ENCODE measurements at regions of chr12 and their contacts with region 1.

Region 1: DNA sequence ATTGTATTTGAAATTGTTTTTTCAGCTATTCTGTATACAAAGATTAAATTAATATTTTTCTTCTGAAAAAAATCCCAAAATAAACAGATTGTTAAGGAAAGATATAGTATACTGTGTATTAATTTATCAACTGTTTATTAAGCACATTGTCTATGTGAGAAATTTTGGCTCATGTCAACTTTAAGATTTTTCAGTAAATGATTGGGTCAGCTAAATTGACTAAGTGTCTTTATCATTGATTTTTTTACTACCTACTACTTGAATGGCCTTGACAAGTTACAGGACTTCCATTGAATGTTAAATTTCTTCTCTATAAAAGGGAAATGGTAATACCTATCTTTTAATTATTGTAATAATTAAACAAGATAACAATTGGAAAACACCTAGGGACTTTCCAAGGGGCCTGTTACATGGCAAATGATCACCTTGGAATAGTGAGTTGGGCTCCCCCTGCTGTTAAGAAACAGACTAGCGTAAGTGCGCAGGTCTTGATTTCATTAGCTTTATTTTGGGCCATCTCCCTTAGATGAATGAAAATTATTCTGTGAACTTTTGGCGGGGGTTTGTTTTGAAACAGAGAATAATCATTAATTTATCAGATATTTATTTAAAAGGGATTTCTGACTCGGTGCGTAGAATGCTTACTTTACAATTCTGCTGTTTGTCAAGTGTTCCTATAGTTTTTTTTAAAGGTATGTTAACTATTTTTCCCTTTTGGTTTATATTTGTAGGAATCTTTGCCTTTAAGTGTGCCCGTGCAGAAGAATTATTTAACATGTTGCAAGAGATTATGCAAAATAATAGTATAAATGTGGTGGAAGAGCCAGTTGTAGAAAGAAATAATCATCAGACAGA is 14.5 kb upstream of the CCT2 start:
- DNase-seq: no peak
- H3K4me3 ChIP-seq: no peak overlapping the region
- H3K27ac ChIP-seq: peak overlapping the region; percentile 58
- H3K27me3 ChIP-seq: no peaks in the 10 kb centered on the region
- CTCF ChIP-seq: peak; percentile 82

Region 2: DNA sequence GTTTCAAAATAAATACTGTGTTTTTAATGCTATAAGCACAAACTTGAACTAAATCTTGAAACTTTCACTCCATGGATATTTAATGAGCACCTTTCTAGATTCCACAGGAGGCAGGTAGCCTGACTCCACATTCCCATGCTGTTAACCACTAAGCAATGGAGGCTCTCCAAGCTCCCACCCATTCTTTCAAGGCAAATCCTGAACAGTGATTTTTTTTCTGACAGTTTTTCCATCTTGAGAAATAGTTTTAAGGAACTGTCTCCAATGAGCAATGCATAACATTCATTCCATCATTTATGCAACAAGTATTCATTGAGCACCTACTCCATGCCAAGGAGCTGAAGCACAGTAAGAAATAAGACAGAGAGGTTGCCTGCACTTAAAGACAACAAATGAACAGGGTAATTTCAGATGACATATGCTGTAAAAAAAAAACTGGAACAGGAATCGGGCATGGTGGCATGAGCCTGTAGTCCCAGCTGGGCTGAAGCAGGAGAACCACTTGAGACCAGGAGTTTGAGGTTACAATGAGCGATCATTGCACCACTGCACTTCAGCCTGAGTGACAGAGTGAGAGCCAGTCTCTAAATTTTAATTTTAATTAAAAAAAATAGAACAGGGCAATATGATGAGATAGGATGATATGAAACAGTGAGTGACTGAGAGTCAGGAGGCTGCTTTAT is 433.7 kb before region 1 on chr12:
- CTCF ChIA-PET with region 1: no interaction called
- POLR2A ChIA-PET with region 1: no interaction called
- DNase-seq: no peak
- H3K4me3 ChIP-seq: no peak overlapping the region
- H3K27ac ChIP-seq: no peak overlapping the region
- H3K27me3 ChIP-seq: peaks cover 3% of the 10 kb centered on the region
- CTCF ChIP-seq: no peak

Region 3: DNA sequence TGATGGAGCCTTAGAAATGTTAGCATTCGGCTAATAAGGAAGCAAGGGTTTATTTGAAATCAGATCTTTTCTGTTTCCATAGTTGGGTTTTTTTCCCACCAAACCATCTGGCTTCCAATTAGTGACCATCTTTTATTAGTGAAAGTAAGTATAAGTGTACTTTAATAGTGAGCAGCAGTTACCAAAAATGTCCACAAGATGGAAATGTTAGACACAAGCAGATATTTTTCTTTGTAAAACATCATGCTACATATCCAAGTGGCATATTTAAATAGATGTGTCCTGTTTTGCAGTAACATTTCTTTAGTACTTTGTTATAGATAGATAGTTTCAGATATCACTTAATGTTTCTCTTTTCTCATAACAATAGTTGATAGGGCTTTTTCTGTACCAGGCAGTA is 182.4 kb before region 1 on chr12:
- CTCF ChIA-PET with region 1: interaction called, 90 read pairs
- POLR2A ChIA-PET with region 1: no interaction called
- DNase-seq: peak; percentile 50
- H3K4me3 ChIP-seq: no peak overlapping the region
- H3K27ac ChIP-seq: no peak overlapping the region
- H3K27me3 ChIP-seq: no peaks in the 10 kb centered on the region
- CTCF ChIP-seq: peak; percentile 73

Region 4: GRCh38 chr12:69396041-69396440 is 174.7 kb before region 1 on chr12:
- CTCF ChIA-PET with region 1: interaction called, 90 read pairs
- POLR2A ChIA-PET with region 1: no interaction called
- DNase-seq: no peak
- H3K4me3 ChIP-seq: no peak overlapping the region
- H3K27ac ChIP-seq: no peak overlapping the region
- H3K27me3 ChIP-seq: no peaks in the 10 kb centered on the region
- CTCF ChIP-seq: no peak

Region 5: GRCh38 chr12:69470189-69471075 is 100.3 kb before region 1 on chr12 and contains the start of gene FRS2:
- CTCF ChIA-PET with region 1: interaction called, 14 read pairs
- POLR2A ChIA-PET with region 1: interaction called, 5 read pairs
- DNase-seq: peak; percentile 71
- H3K4me3 ChIP-seq: peak within 1 kb of the TSS; percentile 89
- H3K27ac ChIP-seq: peak within 1 kb of the TSS; percentile 82
- H3K27me3 ChIP-seq: no peaks in the 10 kb centered on the region
- CTCF ChIP-seq: peak; percentile 48
- polyA plus RNA-seq, gene FRS2: 28.2 and 41.9 TPM in 2 replicates

Region 6: DNA sequence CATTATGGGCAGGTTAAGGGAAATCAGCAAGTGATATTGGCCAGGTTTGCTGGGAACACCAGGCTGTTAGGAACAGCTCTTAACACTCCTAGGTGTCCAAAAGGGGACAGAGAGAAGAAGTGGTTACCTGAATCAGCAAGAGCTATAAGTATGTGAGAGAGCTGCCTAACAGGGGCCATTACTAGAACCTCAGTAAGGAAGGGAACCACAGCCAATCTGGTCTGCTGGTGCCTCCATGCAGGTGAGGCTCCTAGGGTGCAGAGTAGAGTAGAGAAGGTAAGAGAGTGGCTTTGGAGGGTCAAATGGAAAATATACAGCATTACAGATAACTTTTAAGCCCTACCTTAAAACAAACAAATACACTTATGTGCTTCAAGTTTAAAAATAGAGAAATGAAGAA is 22.1 kb before region 1 on chr12:
- CTCF ChIA-PET with region 1: interaction called, 73 read pairs
- POLR2A ChIA-PET with region 1: no interaction called
- DNase-seq: no peak
- H3K4me3 ChIP-seq: no peak overlapping the region
- H3K27ac ChIP-seq: no peak overlapping the region
- H3K27me3 ChIP-seq: no peaks in the 10 kb centered on the region
- CTCF ChIP-seq: no peak

Region 7: GRCh38 chr12:69553627-69554248 is 17.0 kb before region 1 on chr12:
- CTCF ChIA-PET with region 1: interaction called, 73 read pairs
- POLR2A ChIA-PET with region 1: interaction called, 6 read pairs
- DNase-seq: no peak
- H3K4me3 ChIP-seq: no peak overlapping the region
- H3K27ac ChIP-seq: no peak overlapping the region
- H3K27me3 ChIP-seq: no peaks in the 10 kb centered on the region
- CTCF ChIP-seq: no peak

Region 8: DNA sequence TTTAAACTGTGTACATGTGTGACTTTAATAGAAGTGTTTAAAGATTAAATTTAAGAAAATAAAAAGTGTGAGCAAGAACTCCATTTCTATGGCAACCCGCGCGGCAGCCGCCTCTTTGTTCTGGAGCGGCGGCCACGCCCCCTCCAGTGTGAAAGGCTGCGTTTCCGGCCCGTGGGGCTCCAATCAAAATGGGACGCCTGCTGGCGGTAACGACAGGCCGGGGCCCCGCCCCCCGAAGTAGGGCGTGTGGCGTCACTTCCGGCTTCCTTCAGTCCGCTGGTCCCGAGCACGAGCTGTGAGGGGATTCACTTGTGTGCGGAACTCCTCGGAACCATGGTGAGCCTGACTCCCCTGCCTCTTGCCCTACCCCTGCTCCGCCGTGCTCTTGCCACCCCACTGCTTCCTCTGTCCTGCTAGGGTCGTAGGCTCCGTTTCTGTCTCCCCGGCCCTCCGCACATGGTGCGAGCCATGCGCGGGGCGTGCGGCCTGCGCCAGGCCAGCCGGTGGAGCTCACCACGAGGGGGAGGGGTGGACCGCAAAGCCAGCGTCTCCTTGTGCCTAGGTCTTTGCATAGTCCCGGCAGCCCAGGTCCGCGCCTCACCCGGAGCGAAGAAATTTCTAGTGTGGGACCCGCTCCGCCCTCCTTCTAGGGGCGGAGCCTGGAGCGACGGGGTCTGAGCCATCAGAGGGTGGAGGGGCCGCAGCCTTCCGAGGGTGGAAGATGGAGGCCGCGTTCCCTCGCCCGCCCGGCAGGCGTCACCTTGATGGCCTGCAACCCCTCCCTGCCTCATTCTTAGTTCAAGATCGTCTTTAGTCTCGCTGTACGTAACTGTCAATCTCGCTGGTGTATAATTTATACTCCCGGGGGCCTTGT is 14.7 kb after region 1 on chr12 and contains the start of gene CCT2:
- CTCF ChIA-PET with region 1: interaction called, 33 read pairs
- POLR2A ChIA-PET with region 1: no interaction called
- DNase-seq: peak; percentile 85
- H3K4me3 ChIP-seq: peak within 1 kb of the TSS; percentile 100
- H3K27ac ChIP-seq: peak within 1 kb of the TSS; percentile 97
- H3K27me3 ChIP-seq: no peaks in the 10 kb centered on the region
- CTCF ChIP-seq: peak; percentile 60
- polyA plus RNA-seq, gene CCT2: 256 and 284 TPM in 2 replicates